ENCODE measurements at regions of chr20 and their contacts with region 1.

Region 1: DNA sequence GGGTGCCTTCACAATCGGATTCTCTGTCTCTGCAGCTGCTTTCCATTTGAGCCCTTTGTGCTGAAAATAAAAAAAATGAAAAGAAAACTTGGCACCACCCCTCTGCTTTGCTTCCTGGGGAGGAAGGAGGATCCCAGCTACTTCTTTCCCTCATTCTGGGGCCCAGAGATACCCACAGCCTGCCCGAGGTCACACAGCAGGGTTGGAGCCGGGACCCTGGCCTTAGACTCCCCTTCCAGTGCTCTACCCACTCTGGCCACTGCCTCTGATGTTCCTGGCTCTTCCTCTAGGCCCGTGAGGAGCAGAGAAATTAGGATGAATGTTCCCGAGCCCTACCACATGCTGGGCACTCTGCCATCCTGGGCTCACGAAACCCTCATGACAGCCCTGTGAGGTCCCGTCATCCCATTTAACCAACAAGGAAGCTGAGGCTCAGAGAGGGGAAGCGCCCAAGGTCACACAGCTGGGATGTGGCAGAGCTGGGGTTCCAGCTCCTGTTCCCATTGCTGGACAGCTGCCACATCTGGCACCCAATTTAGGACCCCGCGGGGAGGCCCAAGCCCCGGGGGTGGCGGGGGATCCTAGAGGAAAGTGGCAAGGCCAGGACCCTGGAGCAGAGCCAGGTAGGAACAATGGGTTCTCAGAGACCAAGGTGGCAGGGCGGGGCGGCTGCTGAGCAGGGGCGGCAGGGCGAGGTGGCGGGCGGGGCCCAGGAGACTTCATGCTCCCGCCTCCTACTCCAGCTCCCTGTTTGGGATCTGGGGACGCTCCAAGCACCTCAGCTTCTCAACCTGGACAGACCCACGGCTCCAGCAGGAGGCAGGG is 76.6 kb downstream of the CEBPB start:
- DNase-seq: no peak
- H3K4me3 Mint-ChIP-seq: no peak overlapping the region
- H3K27ac Mint-ChIP-seq: peak overlapping the region; percentile 25
- H3K4me1 Mint-ChIP-seq: peaks cover 17% of the 10 kb centered on the region
- H3K27me3 Mint-ChIP-seq: peaks cover 10% of the 10 kb centered on the region

Region 2: DNA sequence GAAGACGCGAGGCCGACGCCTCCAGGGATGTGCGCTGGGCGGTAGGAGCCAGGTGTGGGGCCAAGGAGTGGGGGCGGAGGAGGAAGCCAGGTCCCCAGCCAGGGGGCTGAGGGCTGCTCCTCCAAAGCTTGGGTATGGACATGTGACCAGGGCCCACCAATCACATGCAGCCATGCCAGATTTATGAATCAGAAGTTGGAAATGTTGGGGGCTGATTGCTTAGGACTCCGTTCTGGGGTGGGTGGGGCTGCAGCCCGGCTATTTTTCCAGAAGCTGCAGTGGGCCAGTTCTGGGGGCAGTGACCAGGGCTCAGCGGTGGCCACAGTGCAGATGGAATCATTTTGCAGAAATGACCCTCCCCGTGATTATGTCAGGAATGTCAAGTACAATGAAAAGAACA is 19.4 kb after region 1 on chr20:
- CTCF ChIA-PET with region 1: interaction called, 13 read pairs
- POLR2A ChIA-PET with region 1: no interaction called
- DNase-seq: no peak
- H3K4me3 Mint-ChIP-seq: no peak overlapping the region
- H3K27ac Mint-ChIP-seq: no peak overlapping the region
- H3K4me1 Mint-ChIP-seq: peaks cover 28% of the 10 kb centered on the region
- H3K27me3 Mint-ChIP-seq: peaks cover 2% of the 10 kb centered on the region